AG04450 (cell line): ENCODE measurements at regions of chr10 and their contacts with region 1.

Region 1: GRCh38 chr10:16626697-16627096 is 105.0 kb upstream of the C1QL3 start:
- DNase-seq: no peak
- H3K4me3 ChIP-seq: no peak overlapping the region
- H3K27ac ChIP-seq: no peak overlapping the region
- H3K27me3 ChIP-seq: no peaks in the 10 kb centered on the region
- CTCF ChIP-seq: no peak

Region 2: GRCh38 chr10:15266117-15266516 is 1360.6 kb before region 1 on chr10:
- CTCF ChIA-PET with region 1: interaction called, 10 read pairs
- POLR2A ChIA-PET with region 1: no interaction called
- DNase-seq: no peak
- H3K4me3 ChIP-seq: no peak overlapping the region
- H3K27ac ChIP-seq: no peak overlapping the region
- H3K27me3 ChIP-seq: no peaks in the 10 kb centered on the region
- CTCF ChIP-seq: no peak

Region 3: DNA sequence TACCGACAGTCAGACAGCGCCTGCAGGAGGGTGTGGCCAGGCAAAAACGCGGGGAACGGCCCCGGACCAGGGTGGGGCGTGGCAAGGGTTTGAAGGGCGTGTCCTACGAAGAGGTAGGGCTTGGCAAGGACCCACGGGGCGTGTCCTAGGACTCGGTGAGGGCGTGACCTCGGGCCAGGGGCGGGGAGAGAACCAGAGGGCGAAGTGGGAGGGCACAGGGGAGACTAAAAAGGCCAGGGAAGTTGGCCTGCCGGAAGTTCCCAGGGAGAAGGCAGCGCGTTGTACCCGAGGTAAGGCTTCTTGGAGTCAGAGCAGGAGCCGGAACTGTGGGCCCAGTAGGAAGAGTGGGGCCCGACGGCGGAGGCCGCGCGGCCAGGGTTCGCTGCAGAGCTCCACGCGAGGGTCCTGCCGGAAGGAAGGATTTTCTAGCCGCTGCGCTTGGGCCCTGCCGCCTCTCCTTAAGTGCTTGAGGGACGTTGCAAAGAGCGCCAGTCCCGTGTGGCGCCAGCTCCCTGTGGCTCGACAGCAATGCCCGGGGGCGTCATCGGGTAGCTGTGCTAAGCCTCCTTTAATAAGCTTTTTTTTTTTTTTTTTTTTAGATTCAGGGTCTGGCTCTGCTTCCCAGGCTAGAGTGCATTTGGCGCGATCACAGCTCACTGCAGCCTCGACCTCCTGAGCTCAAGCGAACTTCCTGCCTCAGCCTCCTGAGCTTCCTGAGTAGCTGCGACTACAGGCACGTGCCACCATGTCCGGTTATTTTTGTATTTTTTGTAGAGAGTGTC is 189.7 kb before region 1 on chr10 and contains the start of gene PTER:
- CTCF ChIA-PET with region 1: no interaction called
- POLR2A ChIA-PET with region 1: interaction called, 11 read pairs
- DNase-seq: peak; percentile 73
- H3K4me3 ChIP-seq: peak within 1 kb of the TSS; percentile 67
- H3K27ac ChIP-seq: peak within 1 kb of the TSS; percentile 11
- H3K27me3 ChIP-seq: peaks cover 6% of the 10 kb centered on the region
- CTCF ChIP-seq: no peak
- polyA plus RNA-seq, gene PTER: 6.3 and 8.3 TPM in 2 replicates